ENCODE measurements at regions of chr5 and their contacts with region 1.

Region 1: GRCh38 chr5:154072414-154073171 is 33.8 kb downstream of the MFAP3 start:
- DNase-seq: peak; percentile 91
- H3K4me3 Mint-ChIP-seq: no peak overlapping the region
- H3K27ac Mint-ChIP-seq: no peak overlapping the region
- H3K4me1 Mint-ChIP-seq: peaks cover 11% of the 10 kb centered on the region
- H3K27me3 Mint-ChIP-seq: no peaks in the 10 kb centered on the region

Region 2: GRCh38 chr5:153974131-153974812 is 98.3 kb before region 1 on chr5:
- CTCF ChIA-PET with region 1: interaction called, 16 read pairs
- intact Hi-C with region 1: loop called (anchors 1 kb)
- DNase-seq: peak; percentile 58
- H3K4me3 Mint-ChIP-seq: no peak overlapping the region
- H3K27ac Mint-ChIP-seq: no peak overlapping the region
- H3K4me1 Mint-ChIP-seq: no peaks in the 10 kb centered on the region
- H3K27me3 Mint-ChIP-seq: peaks cover 3% of the 10 kb centered on the region

Region 3: DNA sequence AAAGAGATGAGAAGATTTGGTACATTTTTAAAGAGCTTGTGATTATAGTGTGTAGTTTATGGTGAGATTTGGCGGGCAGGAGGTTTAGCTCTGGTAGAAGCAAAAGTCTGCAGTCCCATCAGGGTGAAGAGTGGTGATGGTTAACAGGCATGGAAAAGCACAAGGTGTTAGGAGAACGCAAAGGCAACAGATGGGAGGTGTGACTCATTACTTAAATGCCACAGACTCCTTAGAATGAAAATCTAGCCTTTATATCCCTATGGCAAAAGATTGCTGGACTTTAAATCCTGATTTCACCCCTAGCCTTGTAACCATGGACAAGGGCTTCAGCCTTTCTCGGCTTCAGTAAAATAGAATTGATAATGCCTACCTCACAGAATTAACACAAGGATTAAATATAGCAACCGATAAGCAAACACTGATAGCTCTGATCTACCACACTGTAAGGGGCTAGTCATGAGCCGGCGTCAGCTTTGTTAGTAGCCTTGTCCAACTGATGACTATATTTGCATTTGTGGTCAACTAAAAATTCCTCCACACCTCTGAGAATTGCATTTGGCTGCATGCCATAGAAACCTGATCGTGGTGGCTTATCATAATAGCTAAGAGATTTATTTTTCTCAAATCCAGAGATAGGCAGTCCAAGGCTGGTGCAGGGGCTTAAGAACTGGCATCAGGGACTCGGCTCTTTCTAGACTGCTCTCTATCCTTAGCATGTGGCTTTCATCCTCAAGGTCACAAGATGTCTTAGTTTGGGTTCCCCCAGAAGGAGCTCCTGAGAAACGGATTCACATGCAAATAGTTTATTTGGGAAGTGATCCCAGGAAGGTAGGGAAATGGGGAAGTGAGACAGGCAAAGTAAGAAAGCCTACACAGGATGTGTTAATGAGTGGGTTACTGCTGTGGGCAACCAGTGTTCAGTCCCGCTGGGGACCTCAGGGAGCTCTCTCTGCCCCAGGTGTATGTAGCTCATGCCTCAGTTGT is 14.2 kb before region 1 on chr5:
- CTCF ChIA-PET with region 1: interaction called, 17 read pairs
- intact Hi-C with region 1: no loop called
- DNase-seq: no peak
- H3K4me3 Mint-ChIP-seq: no peak overlapping the region
- H3K27ac Mint-ChIP-seq: no peak overlapping the region
- H3K4me1 Mint-ChIP-seq: peaks cover 7% of the 10 kb centered on the region
- H3K27me3 Mint-ChIP-seq: no peaks in the 10 kb centered on the region

Region 4: GRCh38 chr5:154179846-154180710 is 107.5 kb after region 1 on chr5:
- CTCF ChIA-PET with region 1: interaction called, 49 read pairs
- intact Hi-C with region 1: loop called (anchors 1 kb)
- DNase-seq: peak; percentile 52
- H3K4me3 Mint-ChIP-seq: no peak overlapping the region
- H3K27ac Mint-ChIP-seq: no peak overlapping the region
- H3K4me1 Mint-ChIP-seq: no peaks in the 10 kb centered on the region
- H3K27me3 Mint-ChIP-seq: peaks cover 4% of the 10 kb centered on the region

Region 5: GRCh38 chr5:154196955-154197652 is 124.5 kb after region 1 on chr5:
- CTCF ChIA-PET with region 1: interaction called, 13 read pairs
- intact Hi-C with region 1: loop called (anchors 1 kb)
- DNase-seq: no peak
- H3K4me3 Mint-ChIP-seq: no peak overlapping the region
- H3K27ac Mint-ChIP-seq: peak overlapping the region; percentile 86
- H3K4me1 Mint-ChIP-seq: peaks cover 67% of the 10 kb centered on the region
- H3K27me3 Mint-ChIP-seq: no peaks in the 10 kb centered on the region

Region 6: GRCh38 chr5:154405078-154405792 is 332.6 kb after region 1 on chr5:
- CTCF ChIA-PET with region 1: interaction called, 113 read pairs
- intact Hi-C with region 1: loop called (anchors 1 kb)
- DNase-seq: peak; percentile 82
- H3K4me3 Mint-ChIP-seq: peak overlapping the region; percentile 44
- H3K27ac Mint-ChIP-seq: no peak overlapping the region
- H3K4me1 Mint-ChIP-seq: peaks cover 10% of the 10 kb centered on the region
- H3K27me3 Mint-ChIP-seq: no peaks in the 10 kb centered on the region

Region 7: GRCh38 chr5:154467655-154468354 is 395.2 kb after region 1 on chr5:
- CTCF ChIA-PET with region 1: interaction called, 12 read pairs
- intact Hi-C with region 1: loop called (anchors 1 kb)
- DNase-seq: peak; percentile 88
- H3K4me3 Mint-ChIP-seq: no peak overlapping the region
- H3K27ac Mint-ChIP-seq: no peak overlapping the region
- H3K4me1 Mint-ChIP-seq: peaks cover 6% of the 10 kb centered on the region
- H3K27me3 Mint-ChIP-seq: peaks cover 36% of the 10 kb centered on the region

Measured in activated naive CD4-positive, alpha-beta T cell treated with anti-CD3 and anti-CD28 coated beads for 36 hours (primary cell).